WTC11 (cell line): ENCODE measurements at regions of chrX and their contacts with region 1.

Region 1: DNA sequence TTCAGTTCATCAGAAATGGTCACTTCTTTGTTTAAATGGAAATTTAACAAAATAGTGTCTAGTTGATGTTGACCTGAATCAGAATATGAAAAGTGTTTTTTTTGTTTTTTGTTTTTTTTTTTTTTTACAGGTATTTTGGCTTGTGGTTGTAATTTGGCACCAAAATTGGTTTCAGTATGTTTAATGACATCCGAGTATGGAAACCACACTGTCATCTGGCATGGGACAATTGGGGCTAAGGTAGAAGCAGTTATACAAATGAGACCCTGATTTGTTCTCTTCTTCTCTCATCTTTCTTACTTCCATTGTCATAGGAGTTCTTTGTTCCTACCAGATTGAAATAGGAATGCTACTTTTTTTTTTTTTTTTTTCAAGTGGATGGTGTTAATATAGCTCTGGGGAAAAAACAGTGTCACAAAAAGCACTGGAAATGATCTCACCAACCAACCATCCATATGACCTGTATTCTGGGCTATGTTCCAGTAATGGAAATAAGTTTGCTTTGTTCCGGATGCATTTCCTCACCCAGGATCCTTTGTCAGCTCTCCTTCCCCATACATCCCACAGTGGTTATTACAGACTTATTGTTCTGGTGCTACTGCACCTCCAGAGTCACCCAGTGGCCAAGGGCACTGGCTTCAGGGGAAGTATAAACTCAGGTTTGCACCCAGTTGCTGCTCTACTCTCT is 95.8 kb downstream of the ATXN3L start:
- DNase-seq: no peak
- ATAC-seq: no peak
- H3K4me3 Mint-ChIP-seq: no peak overlapping the region
- H3K27ac Mint-ChIP-seq: no peak overlapping the region
- H3K4me1 Mint-ChIP-seq: peaks cover 40% of the 10 kb centered on the region
- H3K27me3 Mint-ChIP-seq: no peaks in the 10 kb centered on the region
- CTCF ChIP-seq: no peak

Region 2: DNA sequence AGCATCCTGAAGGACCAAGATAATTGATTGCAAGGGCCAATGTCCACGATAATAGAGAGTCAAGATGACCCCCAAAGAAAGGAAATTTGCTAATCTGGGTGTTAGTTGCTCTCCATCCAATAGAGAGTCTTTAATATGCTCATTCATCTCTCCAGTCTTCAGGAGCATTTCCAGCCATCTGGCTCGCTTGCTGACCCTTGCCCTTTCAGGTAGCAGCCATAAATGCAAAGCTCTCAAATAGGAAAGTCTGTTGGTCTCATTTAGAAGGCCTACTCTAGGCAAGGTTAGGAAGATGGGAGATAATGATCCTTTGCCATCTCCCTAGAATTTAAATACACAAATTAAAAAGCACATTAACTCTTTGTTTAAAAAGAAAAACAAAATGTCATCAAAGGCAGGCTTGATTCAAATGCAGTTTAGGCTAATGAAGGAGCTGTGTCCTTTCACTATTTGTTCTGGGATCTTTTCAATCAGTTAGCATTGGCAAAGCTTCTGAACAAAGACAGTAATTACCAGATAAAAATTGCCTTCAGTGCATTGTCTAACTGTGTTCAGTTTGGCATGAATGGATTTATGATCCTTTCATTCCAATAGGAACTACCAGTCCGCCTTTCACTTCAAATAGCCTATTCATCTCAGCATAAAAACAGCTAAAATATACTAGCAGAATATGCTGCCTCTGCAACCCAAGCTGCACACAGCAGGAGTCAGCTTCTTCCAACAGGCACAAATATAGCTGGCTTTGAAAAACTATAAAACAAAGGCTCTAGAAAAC is 145.4 kb after region 1 on chrX:
- CTCF ChIA-PET with region 1: no interaction called
- POLR2A ChIA-PET with region 1: interaction called, 10 read pairs
- DNase-seq: no peak
- ATAC-seq: no peak
- H3K4me3 Mint-ChIP-seq: no peak overlapping the region; the same call in 1 of the 2 replicates
- H3K27ac Mint-ChIP-seq: no peak overlapping the region
- H3K4me1 Mint-ChIP-seq: peaks cover 42% of the 10 kb centered on the region
- H3K27me3 Mint-ChIP-seq: no peaks in the 10 kb centered on the region
- CTCF ChIP-seq: no peak